Gastrocnemius medialis (tissue), 4 donors: ENCODE measurements at regions of chr6 and their contacts with region 1.

Region 1: DNA sequence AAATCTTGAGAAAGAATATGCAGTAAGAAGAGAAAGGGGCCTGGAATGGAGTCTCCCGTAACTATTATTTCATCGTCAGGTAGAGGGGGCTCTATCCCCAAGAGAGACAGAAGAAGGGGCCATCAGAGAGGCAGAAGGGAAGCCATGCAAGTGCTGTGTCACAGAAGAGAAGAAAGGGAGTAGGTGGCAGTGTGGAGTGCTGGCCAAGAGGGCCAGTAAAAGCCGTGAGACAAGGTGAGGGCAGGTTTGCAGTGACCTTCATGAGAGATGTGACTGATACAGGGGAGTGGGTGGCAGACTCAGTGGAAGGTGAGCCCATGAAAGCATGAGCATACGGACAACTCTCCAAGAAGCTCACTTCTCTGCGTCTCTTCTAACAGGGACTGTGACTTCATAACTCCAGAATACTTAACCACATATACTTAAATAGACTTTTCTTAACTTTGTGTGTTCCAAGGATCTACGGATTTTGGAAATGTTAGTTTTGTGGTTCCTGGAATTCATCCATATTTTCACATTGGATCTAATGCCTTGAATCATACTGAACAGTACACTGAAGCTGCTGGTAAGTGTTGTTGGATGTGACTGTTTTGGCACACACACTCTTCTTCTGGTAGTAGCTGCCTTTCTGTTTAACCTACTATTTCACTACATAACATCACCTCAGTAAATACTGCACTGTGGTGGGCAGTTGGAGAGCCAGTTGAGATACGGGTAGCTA is 15.6 kb downstream of the PM20D2 start:
- DNase-seq: peak in 1 of 2 donors; percentile 40
- ATAC-seq: peak; percentile 63 to 79
- H3K4me3 ChIP-seq: peak overlapping the region in 3 of 4 donors; percentile 2 to 11 (median 2)
- H3K27ac ChIP-seq: peak overlapping the region; percentile 79 to 88 (median 86)
- H3K4me1 ChIP-seq: peaks cover 12 to 23% of the 10 kb centered on the region in 2 donors
- H3K27me3 ChIP-seq: no peaks in the 10 kb centered on the region
- CTCF ChIP-seq: no peak
- POLR2A ChIP-seq: no peak

Region 2: GRCh38 chr6:89186762-89187161 is 25.3 kb after region 1 on chr6:
- in situ Hi-C with region 1: no loop called
- intact Hi-C with region 1: loop called (anchors 1 kb)
- DNase-seq: peak; percentile 84 to 98
- ATAC-seq: peak; percentile 98
- H3K4me3 ChIP-seq: no peak overlapping the region
- H3K27ac ChIP-seq: peak overlapping the region; percentile 76 to 95 (median 84)
- H3K4me1 ChIP-seq: peaks cover 8 to 18% of the 10 kb centered on the region in 2 donors
- H3K27me3 ChIP-seq: no peaks in the 10 kb centered on the region
- CTCF ChIP-seq: no peak
- POLR2A ChIP-seq: peak; percentile 82 to 92